ENCODE measurements at regions of chr2 and their contacts with region 1.

Region 1: GRCh38 chr2:199979832-199980628 is 24.6 kb downstream of the MAIP1 start:
- DNase-seq: peak; percentile 96
- H3K4me3 ChIP-seq: peak overlapping the region in 3 of 4 donors; percentile 19 to 41 (median 28)
- H3K27ac ChIP-seq: peak overlapping the region in 1 of 4 donors; percentile 35
- H3K4me1 ChIP-seq: peaks cover 3 to 9% (median 7%) of the 10 kb centered on the region in 4 donors
- H3K27me3 ChIP-seq: no peaks in the 10 kb centered on the region
- CTCF ChIP-seq: peak; percentile 79 to 92 (median 88)
- EP300 ChIP-seq: no peak
- POLR2A ChIP-seq: no peak

Region 2: GRCh38 chr2:199659207-199659606 is 320.8 kb before region 1 on chr2:
- intact Hi-C with region 1: no loop called
- DNase-seq: no peak
- H3K4me3 ChIP-seq: peak overlapping the region; percentile 40 to 57 (median 48)
- H3K27ac ChIP-seq: no peak overlapping the region
- H3K4me1 ChIP-seq: peaks cover 0 to 8% (median 2%) of the 10 kb centered on the region in 4 donors
- H3K27me3 ChIP-seq: no peaks in the 10 kb centered on the region
- CTCF ChIP-seq: no peak
- EP300 ChIP-seq: no peak
- POLR2A ChIP-seq: no peak

Region 3: GRCh38 chr2:200306196-200306930 is 326.3 kb after region 1 on chr2 and contains the start of gene SPATS2L:
- intact Hi-C with region 1: loop called (anchors 5 kb)
- DNase-seq: peak; percentile 94
- H3K4me3 ChIP-seq: peak within 1 kb of the TSS; percentile 80 to 98 (median 94)
- H3K27ac ChIP-seq: peak within 1 kb of the TSS; percentile 83 to 96 (median 92)
- H3K4me1 ChIP-seq: peaks cover 28 to 44% (median 39%) of the 10 kb centered on the region in 4 donors
- H3K27me3 ChIP-seq: no peaks in the 10 kb centered on the region
- CTCF ChIP-seq: no peak
- EP300 ChIP-seq: no peak
- POLR2A ChIP-seq: no peak
- total RNA-seq, gene SPATS2L: 51.9 to 151 (median 78.9) TPM

Region 4: GRCh38 chr2:200483729-200484198 is 503.7 kb after region 1 on chr2:
- intact Hi-C with region 1: loop called (anchors 2 kb)
- DNase-seq: no peak
- H3K4me3 ChIP-seq: no peak overlapping the region
- H3K27ac ChIP-seq: no peak overlapping the region
- H3K4me1 ChIP-seq: peaks cover 0 to 15% (median 0%) of the 10 kb centered on the region in 4 donors
- H3K27me3 ChIP-seq: no peaks in the 10 kb centered on the region
- CTCF ChIP-seq: peak in 1 of 3 experiments; percentile 8
- EP300 ChIP-seq: no peak
- POLR2A ChIP-seq: no peak

Region 5: GRCh38 chr2:200703127-200703925 is 723.3 kb after region 1 on chr2:
- intact Hi-C with region 1: loop called (anchors 10 kb)
- DNase-seq: no peak
- H3K4me3 ChIP-seq: no peak overlapping the region
- H3K27ac ChIP-seq: no peak overlapping the region
- H3K4me1 ChIP-seq: no peaks in the 10 kb centered on the region
- H3K27me3 ChIP-seq: peaks cover 0 to 8% (median 0%) of the 10 kb centered on the region in 4 donors
- CTCF ChIP-seq: peak; percentile 31 to 50 (median 43)
- EP300 ChIP-seq: no peak
- POLR2A ChIP-seq: no peak

Measured in esophagus muscularis mucosa (tissue), 4 donors.